ENCODE measurements at regions of chr14 and their contacts with region 1.

Region 1: DNA sequence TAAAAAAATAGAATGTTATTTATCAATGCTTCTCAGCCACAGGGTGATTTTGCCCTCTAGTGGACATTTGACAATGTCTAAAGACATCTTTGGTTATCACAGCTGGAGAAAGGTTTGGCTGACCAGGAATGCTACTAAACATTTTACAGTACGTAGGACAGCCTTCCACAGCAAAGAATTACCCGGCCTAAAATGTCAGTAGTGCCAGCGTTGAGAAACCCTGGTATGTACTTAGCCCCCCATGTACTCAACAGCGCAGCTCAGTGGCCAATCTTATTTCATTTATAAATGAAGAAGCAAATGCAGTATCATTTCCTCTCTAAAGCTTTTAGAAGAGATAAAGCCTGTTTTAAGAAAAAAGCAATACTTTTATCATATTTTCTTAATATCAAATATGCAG is 5.8 kb downstream of the MARK3 start:
- DNase-seq: peak; percentile 41 to 74
- ATAC-seq: peak; percentile 70 to 78
- H3K4me3 ChIP-seq: no peak overlapping the region
- H3K27ac ChIP-seq: no peak overlapping the region
- H3K4me1 ChIP-seq: peaks cover 50% of the 10 kb centered on the region
- CTCF ChIP-seq: peak; percentile 98
- EP300 ChIP-seq: no peak
- POLR2A ChIP-seq: no peak
- RAD21 ChIP-seq: peak; percentile 59 to 70

Region 2: DNA sequence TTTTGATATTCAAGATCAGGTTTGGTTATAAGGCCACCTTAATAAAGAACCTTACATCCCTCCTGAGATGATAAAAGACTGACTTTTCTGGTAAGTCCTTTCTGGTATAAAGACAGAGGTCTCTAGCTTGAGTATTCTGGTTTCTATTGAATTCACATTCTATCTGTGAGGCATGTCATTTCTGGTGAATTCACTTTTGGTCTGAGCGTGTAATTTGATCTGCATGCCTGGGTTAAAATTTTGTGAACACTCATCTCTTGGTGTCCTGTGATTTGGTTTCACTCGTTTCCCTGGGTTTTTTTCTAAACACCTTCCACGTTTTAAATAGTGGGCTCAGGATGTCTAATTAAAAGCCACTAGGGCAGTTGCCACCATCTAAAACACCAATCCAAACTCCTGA is 44.8 kb before region 1 on chr14:
- CTCF ChIA-PET with region 1: interaction called, 27 read pairs
- POLR2A ChIA-PET with region 1: no interaction called
- DNase-seq: no peak
- ATAC-seq: peak in 1 of 2 experiments; percentile 8; a peak in 3 of 6 replicates
- H3K4me3 ChIP-seq: no peak overlapping the region
- H3K27ac ChIP-seq: no peak overlapping the region
- H3K4me1 ChIP-seq: no peaks in the 10 kb centered on the region
- CTCF ChIP-seq: no peak
- EP300 ChIP-seq: no peak
- POLR2A ChIP-seq: no peak
- RAD21 ChIP-seq: no peak

Region 3: DNA sequence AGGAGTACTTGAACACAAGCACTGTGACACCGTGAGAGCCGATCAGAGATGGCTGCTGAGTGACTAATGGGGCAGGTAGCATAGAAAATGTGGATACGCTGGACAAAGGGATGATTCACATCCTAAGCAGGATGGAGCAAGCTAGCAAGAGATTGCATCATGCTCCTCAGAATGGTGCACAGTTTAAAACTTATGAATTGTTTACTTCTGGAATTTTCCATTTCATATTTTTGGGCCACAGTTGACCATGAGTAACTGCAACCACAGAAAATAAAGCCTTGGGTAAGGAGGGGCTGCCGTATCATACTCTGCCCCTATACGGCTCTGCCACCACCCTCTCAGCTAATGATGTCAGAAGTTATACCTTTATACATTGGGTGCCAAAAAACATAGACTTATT is 29.2 kb before region 1 on chr14:
- CTCF ChIA-PET with region 1: interaction called, 14 read pairs
- POLR2A ChIA-PET with region 1: no interaction called
- DNase-seq: peak; percentile 54 to 83
- ATAC-seq: peak; percentile 82 to 95
- H3K4me3 ChIP-seq: no peak overlapping the region
- H3K27ac ChIP-seq: peak overlapping the region; percentile 58 to 81
- H3K4me1 ChIP-seq: 0 out of 3 replicates have a peak, but pooled peaks cover 3% of the 10 kb centered on the region
- CTCF ChIP-seq: no peak
- EP300 ChIP-seq: no peak
- POLR2A ChIP-seq: no peak
- RAD21 ChIP-seq: no peak

Region 4: GRCh38 chr14:103401223-103402214 is 10.5 kb after region 1 on chr14:
- CTCF ChIA-PET with region 1: interaction called, 21 read pairs
- POLR2A ChIA-PET with region 1: no interaction called
- DNase-seq: no peak
- ATAC-seq: peak; percentile 30 to 67; a peak in 3 of 6 replicates
- H3K4me3 ChIP-seq: no peak overlapping the region
- H3K27ac ChIP-seq: peak overlapping the region in 1 of 2 experiments; percentile 52; a peak in 3 of 6 replicates
- H3K4me1 ChIP-seq: peaks cover 53% of the 10 kb centered on the region
- CTCF ChIP-seq: no peak
- EP300 ChIP-seq: no peak
- POLR2A ChIP-seq: no peak
- RAD21 ChIP-seq: no peak

Region 5: DNA sequence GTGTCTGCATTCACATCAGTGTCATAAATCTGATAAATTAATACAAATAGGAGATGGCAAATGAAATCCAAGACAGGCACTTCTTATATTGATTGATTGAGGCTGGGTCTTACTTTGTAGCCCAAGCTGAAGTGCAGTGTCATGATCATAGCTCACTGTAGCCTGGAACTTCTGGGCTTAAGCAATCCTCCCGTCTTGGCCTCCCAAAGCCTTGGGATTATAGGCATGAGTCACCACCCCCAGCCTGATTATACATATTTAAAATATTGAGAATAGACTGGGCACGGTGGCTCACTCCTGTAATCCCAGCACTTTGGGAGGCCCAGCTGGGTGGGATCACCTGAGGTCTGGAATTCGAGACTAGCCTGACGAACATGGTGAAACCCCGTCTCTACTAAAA is 45.5 kb after region 1 on chr14:
- CTCF ChIA-PET with region 1: interaction called, 10 read pairs
- POLR2A ChIA-PET with region 1: no interaction called
- DNase-seq: peak in 1 of 2 experiments; percentile 22
- ATAC-seq: no peak
- H3K4me3 ChIP-seq: no peak overlapping the region
- H3K27ac ChIP-seq: no peak overlapping the region
- H3K4me1 ChIP-seq: no peaks in the 10 kb centered on the region
- CTCF ChIP-seq: no peak
- EP300 ChIP-seq: no peak
- POLR2A ChIP-seq: no peak
- RAD21 ChIP-seq: no peak